Activated CD4-positive, alpha-beta T cell treated with anti-CD3 and anti-CD28 coated beads for 36 hours (primary cell): ENCODE measurements at regions of chr7 and their contacts with region 1.

Region 1: GRCh38 chr7:106346678-106347217 is 62.0 kb upstream of the NAMPT start:
- DNase-seq: peak; percentile 65
- ATAC-seq: peak; percentile 73
- H3K4me3 Mint-ChIP-seq: peak overlapping the region; percentile 66
- H3K27ac Mint-ChIP-seq: peak overlapping the region; percentile 100
- H3K4me1 Mint-ChIP-seq: peaks cover 54% of the 10 kb centered on the region
- H3K27me3 Mint-ChIP-seq: peaks cover 12% of the 10 kb centered on the region

Region 2: DNA sequence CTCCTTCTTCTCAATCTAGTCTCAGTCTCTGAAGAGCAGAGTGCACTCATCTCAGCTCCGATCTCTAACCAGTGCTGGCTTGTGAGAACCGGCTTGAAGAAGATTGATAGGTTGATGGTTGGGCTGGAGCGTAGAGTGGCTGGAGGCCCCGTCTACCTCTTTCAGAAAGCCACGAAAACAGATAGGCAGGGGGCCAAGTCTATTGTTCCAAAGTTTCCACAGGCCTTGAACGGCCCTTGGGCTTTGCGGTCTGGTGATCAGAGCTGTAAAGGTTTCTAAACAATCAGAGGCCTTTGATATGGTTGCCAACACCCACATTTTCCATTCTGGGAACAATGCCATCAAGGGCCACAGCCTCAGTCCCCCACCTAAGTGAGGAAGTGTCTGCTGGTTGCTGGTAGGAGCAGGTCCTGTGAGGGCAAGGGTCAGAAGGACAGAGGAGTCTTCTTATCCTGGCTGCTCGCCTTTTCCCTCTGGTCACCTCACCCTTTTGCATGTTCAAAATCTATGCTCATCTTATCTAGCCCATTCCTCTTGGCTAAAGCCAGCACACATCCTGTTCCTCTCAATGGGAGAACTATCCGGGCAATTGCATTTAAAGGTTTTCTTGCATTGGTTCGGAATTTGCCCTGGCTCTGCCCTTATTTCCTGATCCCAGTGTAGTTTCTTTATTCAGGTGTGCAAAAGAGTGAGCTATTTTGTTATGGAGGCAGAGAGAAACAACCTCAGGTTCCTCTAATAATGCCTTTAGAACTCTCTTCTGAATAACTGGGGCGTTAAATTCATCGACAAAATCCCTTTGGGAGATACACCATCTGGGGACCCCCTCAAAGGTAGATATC is 1403.0 kb before region 1 on chr7:
- CTCF ChIA-PET with region 1: no interaction called
- POLR2A ChIA-PET with region 1: no interaction called
- intact Hi-C with region 1: loop called in 1 of 2 experiments (anchors 5 kb)
- DNase-seq: peak; percentile 87
- ATAC-seq: peak; percentile 68
- H3K4me3 Mint-ChIP-seq: peak overlapping the region; percentile 95
- H3K27ac Mint-ChIP-seq: peak overlapping the region; percentile 99
- H3K4me1 Mint-ChIP-seq: peaks cover 68% of the 10 kb centered on the region
- H3K27me3 Mint-ChIP-seq: no peaks in the 10 kb centered on the region

Region 3: GRCh38 chr7:105853931-105854419 is 492.8 kb before region 1 on chr7:
- CTCF ChIA-PET with region 1: no interaction called
- POLR2A ChIA-PET with region 1: no interaction called
- intact Hi-C with region 1: no loop called
- DNase-seq: no peak
- ATAC-seq: no peak
- H3K4me3 Mint-ChIP-seq: no peak overlapping the region
- H3K27ac Mint-ChIP-seq: no peak overlapping the region
- H3K4me1 Mint-ChIP-seq: peaks cover 62% of the 10 kb centered on the region
- H3K27me3 Mint-ChIP-seq: no peaks in the 10 kb centered on the region

Region 4: GRCh38 chr7:105943486-105943885 is 403.3 kb before region 1 on chr7:
- CTCF ChIA-PET with region 1: no interaction called
- POLR2A ChIA-PET with region 1: no interaction called
- intact Hi-C with region 1: no loop called
- DNase-seq: no peak
- ATAC-seq: no peak
- H3K4me3 Mint-ChIP-seq: no peak overlapping the region
- H3K27ac Mint-ChIP-seq: no peak overlapping the region
- H3K4me1 Mint-ChIP-seq: no peaks in the 10 kb centered on the region
- H3K27me3 Mint-ChIP-seq: no peaks in the 10 kb centered on the region

Region 5: GRCh38 chr7:106071356-106071998 is 275.3 kb before region 1 on chr7:
- CTCF ChIA-PET with region 1: no interaction called
- POLR2A ChIA-PET with region 1: no interaction called
- intact Hi-C with region 1: no loop called
- DNase-seq: peak; percentile 71
- ATAC-seq: peak; percentile 98
- H3K4me3 Mint-ChIP-seq: peak overlapping the region; percentile 60
- H3K27ac Mint-ChIP-seq: peak overlapping the region; percentile 95
- H3K4me1 Mint-ChIP-seq: peaks cover 35% of the 10 kb centered on the region
- H3K27me3 Mint-ChIP-seq: no peaks in the 10 kb centered on the region

Region 6: GRCh38 chr7:106262221-106262881 is 84.4 kb before region 1 on chr7:
- CTCF ChIA-PET with region 1: no interaction called
- POLR2A ChIA-PET with region 1: no interaction called
- intact Hi-C with region 1: no loop called
- DNase-seq: no peak
- ATAC-seq: no peak
- H3K4me3 Mint-ChIP-seq: no peak overlapping the region
- H3K27ac Mint-ChIP-seq: peak overlapping the region; percentile 45
- H3K4me1 Mint-ChIP-seq: peaks cover 73% of the 10 kb centered on the region
- H3K27me3 Mint-ChIP-seq: no peaks in the 10 kb centered on the region

Region 7: GRCh38 chr7:106329971-106330733 is 16.6 kb before region 1 on chr7:
- CTCF ChIA-PET with region 1: interaction called, 6 read pairs
- POLR2A ChIA-PET with region 1: no interaction called
- intact Hi-C with region 1: loop called in 1 of 2 experiments (anchors 1 kb)
- DNase-seq: peak; percentile 27
- ATAC-seq: peak; percentile 86
- H3K4me3 Mint-ChIP-seq: no peak overlapping the region
- H3K27ac Mint-ChIP-seq: peak overlapping the region; percentile 53
- H3K4me1 Mint-ChIP-seq: peaks cover 20% of the 10 kb centered on the region
- H3K27me3 Mint-ChIP-seq: peaks cover 19% of the 10 kb centered on the region

Region 8: GRCh38 chr7:106419455-106420182 is 72.9 kb after region 1 on chr7:
- CTCF ChIA-PET with region 1: interaction called, 5 read pairs
- POLR2A ChIA-PET with region 1: interaction called, 30 read pairs
- intact Hi-C with region 1: loop called in 1 of 2 experiments (anchors 1 kb)
- DNase-seq: peak; percentile 67
- ATAC-seq: peak; percentile 74
- H3K4me3 Mint-ChIP-seq: peak overlapping the region; percentile 11
- H3K27ac Mint-ChIP-seq: peak overlapping the region; percentile 77
- H3K4me1 Mint-ChIP-seq: peaks cover 69% of the 10 kb centered on the region
- H3K27me3 Mint-ChIP-seq: peaks cover 9% of the 10 kb centered on the region

Region 9: DNA sequence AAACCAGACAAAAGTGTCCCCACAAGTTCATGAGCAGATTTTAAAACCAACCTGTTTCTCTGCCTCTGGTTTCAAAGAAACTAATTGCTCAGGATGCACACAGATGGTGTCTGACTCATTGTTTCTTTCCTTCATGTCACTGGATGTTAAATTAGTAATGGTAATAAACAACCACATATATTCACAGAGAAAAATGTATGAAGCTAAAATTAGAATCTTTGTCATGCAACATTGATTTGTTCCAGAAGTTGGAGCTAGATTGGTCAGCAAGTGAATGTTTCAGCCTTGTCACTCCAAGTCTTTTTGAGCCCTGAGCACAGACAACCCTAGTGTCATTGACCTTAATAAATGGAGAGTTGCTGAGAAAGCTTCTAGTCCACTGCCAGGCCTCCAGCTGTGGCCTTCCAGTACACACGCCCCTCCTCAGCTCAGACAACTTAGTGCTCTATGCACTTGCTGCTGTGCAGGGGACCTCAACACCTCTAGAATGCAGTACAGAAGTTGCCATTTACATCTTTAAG is 138.3 kb after region 1 on chr7:
- CTCF ChIA-PET with region 1: no interaction called
- POLR2A ChIA-PET with region 1: interaction called, 5 read pairs
- intact Hi-C with region 1: loop called (anchors 1 kb)
- DNase-seq: no peak
- ATAC-seq: peak; percentile 73
- H3K4me3 Mint-ChIP-seq: no peak overlapping the region
- H3K27ac Mint-ChIP-seq: peak overlapping the region; percentile 80
- H3K4me1 Mint-ChIP-seq: peaks cover 60% of the 10 kb centered on the region
- H3K27me3 Mint-ChIP-seq: peaks cover 10% of the 10 kb centered on the region

Region 10: GRCh38 chr7:106865130-106866041 is 518.6 kb after region 1 on chr7 and contains the start of gene PIK3CG:
- CTCF ChIA-PET with region 1: no interaction called
- POLR2A ChIA-PET with region 1: no interaction called
- intact Hi-C with region 1: loop called in 1 of 2 experiments (anchors 5 kb)
- DNase-seq: no peak
- ATAC-seq: peak; percentile 79
- H3K4me3 Mint-ChIP-seq: peak within 1 kb of the TSS; percentile 83
- H3K27ac Mint-ChIP-seq: peak within 1 kb of the TSS; percentile 92
- H3K4me1 Mint-ChIP-seq: peaks cover 75% of the 10 kb centered on the region
- H3K27me3 Mint-ChIP-seq: no peaks in the 10 kb centered on the region
- total RNA-seq, gene PIK3CG: 9.9 to 14.3 TPM